Posterior vena cava (tissue), 2 donors: ENCODE measurements at regions of chr7 and their contacts with region 1.

Region 1: GRCh38 chr7:20870977-20871376 is 84.3 kb upstream of the SP8 start:
- DNase-seq: no peak

Region 2: DNA sequence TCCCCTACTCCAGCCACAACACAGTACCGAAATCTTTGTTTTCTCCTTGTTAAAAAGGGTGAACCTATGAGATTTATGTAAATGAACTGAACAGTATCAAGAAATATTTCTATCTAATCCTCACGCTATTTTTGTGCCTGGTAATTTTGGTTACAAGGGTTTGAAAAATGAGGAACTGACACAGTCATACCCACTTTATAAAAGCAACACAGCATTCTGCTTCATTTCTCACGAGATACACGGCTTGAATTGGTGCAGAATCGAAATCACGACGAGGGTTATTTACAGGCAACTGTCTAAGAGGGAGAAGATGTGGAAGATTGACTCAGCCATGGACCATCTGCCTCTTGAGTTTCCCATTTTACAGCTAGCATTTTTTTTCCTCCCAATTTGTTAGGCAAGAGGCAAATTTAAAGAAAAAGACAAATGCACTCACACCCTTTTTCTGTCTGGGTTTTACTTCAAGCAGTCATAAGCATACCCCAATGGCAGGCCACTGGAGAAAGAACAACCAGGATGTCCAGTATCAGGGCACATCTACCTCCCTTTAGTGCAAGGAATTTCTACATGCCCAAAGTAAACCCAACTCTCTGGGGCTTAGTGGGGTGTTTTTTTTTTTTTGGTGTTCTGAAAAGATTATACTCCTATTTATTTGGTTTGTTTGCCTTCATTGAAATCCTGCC is 432.1 kb before region 1 on chr7:
- intact Hi-C with region 1: loop called in 1 of 2 experiments (anchors 5 kb)
- DNase-seq: no peak